Activated naive CD8-positive, alpha-beta T cell treated with anti-CD3 and anti-CD28 coated beads, Interleukin-2, amount 10 ng/mL, durations not matched to agents 7 days and 5 days (primary cell): ENCODE measurements at regions of chr16 and their contacts with region 1.

Region 1: DNA sequence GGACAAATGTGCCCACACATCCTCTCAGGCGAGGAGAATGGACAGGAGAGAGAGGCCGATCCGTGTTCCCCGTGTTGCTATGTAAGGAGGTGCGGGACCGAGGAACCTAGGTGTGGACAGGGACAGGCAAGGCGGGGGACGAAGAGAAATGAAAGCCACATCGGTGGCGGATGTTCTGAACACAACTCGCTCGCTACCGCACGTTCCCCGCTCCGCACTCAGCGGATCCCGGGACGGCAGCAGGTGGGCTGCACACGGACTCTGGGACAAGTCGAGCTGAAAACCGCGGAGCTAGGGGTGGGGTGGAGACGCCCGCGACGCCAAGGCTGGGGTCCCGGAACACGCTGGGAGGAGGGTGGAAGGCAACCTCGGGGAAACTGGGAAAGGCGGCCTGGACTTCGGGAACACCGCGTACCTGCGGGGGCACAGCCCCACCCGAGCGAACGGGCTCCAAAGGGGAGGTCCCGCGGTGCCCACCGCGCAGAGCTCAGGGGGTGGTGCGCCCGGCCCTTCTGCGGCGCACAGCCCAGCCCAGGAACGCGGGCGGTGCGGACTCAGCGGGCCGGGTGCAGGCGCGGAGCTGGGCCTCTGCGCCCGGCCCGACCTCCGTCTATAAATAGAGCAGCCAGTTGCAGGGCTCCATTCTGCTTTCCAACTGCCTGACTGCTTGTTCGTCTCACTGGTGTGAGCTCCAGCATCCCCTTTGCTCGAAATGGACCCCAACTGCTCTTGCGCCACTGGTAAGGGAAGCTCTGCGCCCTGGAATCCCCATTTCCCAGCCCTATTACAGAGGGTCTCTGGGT is at the start of gene MT1E:
- DNase-seq: peak; percentile 80
- ATAC-seq: peak; percentile 86
- H3K4me3 Mint-ChIP-seq: peak within 1 kb of the TSS; percentile 94
- H3K27ac Mint-ChIP-seq: peak within 1 kb of the TSS; percentile 93
- H3K4me1 Mint-ChIP-seq: peaks cover 17% of the 10 kb centered on the region
- H3K27me3 Mint-ChIP-seq: peaks cover 18% of the 10 kb centered on the region
- total RNA-seq, gene MT1E: 32.6 to 36.4 TPM

Region 2: DNA sequence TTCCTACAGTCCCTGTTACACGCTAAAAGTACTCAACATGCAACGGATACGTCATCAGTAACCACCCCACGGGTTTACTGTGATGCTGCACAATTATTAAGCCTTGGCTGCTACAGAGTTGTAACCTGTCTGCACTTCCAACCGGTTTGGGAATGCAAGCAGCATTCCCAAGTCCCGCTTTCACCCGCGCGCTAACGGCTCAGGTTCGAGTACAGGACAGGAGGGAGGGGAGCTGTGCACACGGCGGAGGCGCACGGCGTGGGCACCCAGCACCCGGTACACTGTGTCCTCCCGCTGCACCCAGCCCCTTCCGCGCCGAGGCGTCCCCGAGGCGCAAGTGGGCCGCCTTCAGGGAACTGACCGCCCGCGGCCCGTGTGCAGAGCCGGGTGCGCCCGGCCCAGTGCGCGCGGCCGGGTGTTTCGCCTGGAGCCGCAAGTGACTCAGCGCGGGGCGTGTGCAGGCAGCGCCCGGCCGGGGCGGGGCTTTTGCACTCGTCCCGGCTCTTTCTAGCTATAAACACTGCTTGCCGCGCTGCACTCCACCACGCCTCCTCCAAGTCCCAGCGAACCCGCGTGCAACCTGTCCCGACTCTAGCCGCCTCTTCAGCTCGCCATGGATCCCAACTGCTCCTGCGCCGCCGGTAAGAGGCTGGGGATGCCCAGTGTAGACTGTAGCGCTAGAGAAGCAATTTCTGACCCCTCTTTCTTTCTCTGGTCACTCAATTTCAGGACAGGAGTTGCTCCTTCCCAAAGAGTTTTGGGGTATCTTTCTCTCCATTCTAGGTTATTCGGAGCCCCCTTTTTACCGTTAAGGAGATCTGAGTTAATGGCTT is 17.1 kb before region 1 on chr16 and contains the start of gene MT2A:
- POLR2A ChIA-PET with region 1: interaction called, 22 read pairs
- DNase-seq: peak; percentile 93
- ATAC-seq: peak; percentile 80
- H3K4me3 Mint-ChIP-seq: peak within 1 kb of the TSS; percentile 91
- H3K27ac Mint-ChIP-seq: peak within 1 kb of the TSS; percentile 90
- H3K4me1 Mint-ChIP-seq: peaks cover 42% of the 10 kb centered on the region
- H3K27me3 Mint-ChIP-seq: no peaks in the 10 kb centered on the region
- total RNA-seq, gene MT2A: 115 to 135 TPM

Region 3: GRCh38 chr16:56643080-56643778 is 17.9 kb after region 1 on chr16:
- POLR2A ChIA-PET with region 1: interaction called, 11 read pairs
- DNase-seq: peak; percentile 85
- ATAC-seq: peak; percentile 100
- H3K4me3 Mint-ChIP-seq: peak overlapping the region; percentile 68
- H3K27ac Mint-ChIP-seq: peak overlapping the region; percentile 34
- H3K4me1 Mint-ChIP-seq: peaks cover 18% of the 10 kb centered on the region
- H3K27me3 Mint-ChIP-seq: peaks cover 63% of the 10 kb centered on the region